Activated CD4-positive, alpha-beta memory T cell treated with anti-CD3 and anti-CD28 coated beads, Interleukin-2, amount 10 ng/mL, durations not matched to agents 7 days and 5 days (primary cell): ENCODE measurements at regions of chr10 and their contacts with region 1.

Region 1: DNA sequence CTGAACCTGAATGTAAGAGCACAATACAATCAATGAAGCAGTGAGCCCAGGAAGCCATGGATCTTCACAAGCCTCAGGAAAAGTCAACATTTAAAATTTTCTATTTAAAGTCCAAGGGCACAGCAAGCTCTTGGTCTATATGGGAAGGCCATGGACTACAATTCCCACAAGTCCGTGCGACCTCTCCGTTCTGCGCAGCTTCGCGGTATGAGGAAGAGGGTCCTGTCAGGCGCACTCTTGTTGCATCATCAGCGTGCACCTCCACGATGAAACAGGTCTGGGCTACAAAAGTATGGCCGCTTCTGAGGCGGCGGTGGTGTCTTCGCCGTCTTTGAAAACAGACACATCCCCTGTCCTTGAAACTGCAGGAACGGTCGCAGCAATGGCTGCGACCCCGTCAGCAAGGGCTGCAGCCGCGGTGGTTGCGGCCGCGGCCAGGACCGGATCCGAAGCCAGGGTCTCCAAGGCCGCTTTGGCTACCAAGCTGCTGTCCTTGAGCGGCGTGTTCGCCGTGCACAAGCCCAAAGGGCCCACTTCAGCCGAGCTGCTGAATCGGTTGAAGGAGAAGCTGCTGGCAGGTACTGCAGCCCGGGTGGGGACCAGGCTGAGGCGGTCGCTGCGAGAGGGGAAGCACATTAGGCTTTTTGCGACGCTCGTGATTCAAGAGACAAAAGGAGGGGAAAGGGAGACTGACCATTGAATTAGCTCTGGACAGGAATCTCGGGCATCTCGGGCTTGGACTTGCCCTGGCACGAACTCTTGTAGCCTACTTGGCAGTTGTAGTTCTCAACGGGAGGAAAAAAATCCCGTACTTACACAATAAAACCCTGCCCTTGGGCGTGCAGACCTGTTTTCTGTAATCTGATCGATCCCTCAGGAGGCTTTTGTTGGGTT is at the start of gene TRUB1:
- DNase-seq: peak; percentile 93
- H3K4me3 Mint-ChIP-seq: peak within 1 kb of the TSS; percentile 94
- H3K27ac Mint-ChIP-seq: peak within 1 kb of the TSS; percentile 83
- H3K4me1 Mint-ChIP-seq: peaks cover 32% of the 10 kb centered on the region
- H3K27me3 Mint-ChIP-seq: no peaks in the 10 kb centered on the region
- total RNA-seq, gene TRUB1: 14.9 to 16.7 TPM

Region 2: GRCh38 chr10:114850126-114850525 is 88.1 kb before region 1 on chr10:
- CTCF ChIA-PET with region 1: no interaction called
- POLR2A ChIA-PET with region 1: no interaction called
- DNase-seq: no peak
- H3K4me3 Mint-ChIP-seq: no peak overlapping the region
- H3K27ac Mint-ChIP-seq: no peak overlapping the region
- H3K4me1 Mint-ChIP-seq: peaks cover 13% of the 10 kb centered on the region
- H3K27me3 Mint-ChIP-seq: no peaks in the 10 kb centered on the region

Region 3: DNA sequence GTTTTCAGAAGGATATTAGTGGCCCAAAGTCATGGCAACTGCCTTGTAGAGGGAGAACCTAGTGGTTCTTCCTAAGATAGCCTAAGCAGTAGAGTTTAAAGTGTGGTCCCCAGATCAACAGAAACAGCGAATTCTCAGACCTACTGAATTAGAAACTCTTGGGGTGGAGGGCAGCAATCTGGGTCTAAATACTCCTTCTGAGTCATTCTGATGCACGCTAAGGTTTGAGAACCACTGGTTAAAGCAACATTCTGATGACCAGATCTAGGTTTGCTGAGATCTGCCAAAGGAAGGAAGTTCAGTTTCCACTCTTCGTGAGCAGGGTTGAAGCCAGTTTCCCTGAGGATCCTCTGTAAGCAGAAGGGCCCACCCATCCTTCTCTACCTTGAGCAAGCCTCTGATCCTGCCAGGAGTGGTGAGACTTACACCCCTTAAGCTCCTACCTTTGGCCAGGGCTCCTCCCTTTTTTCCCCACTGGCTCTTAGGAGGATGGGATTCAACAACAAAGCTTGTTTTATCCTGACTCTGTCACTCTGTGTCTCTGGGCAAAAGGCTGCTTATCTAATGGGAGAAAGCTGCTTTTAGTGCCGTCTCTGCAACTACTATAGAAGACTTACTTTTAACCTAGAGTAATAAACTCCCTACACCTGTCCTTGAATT is 27.0 kb before region 1 on chr10:
- CTCF ChIA-PET with region 1: no interaction called
- POLR2A ChIA-PET with region 1: interaction called, 39 read pairs
- DNase-seq: no peak
- H3K4me3 Mint-ChIP-seq: peak overlapping the region; percentile 21
- H3K27ac Mint-ChIP-seq: peak overlapping the region; percentile 72
- H3K4me1 Mint-ChIP-seq: peaks cover 44% of the 10 kb centered on the region
- H3K27me3 Mint-ChIP-seq: peaks cover 3% of the 10 kb centered on the region

Region 4: GRCh38 chr10:114920470-114920869 is 17.7 kb before region 1 on chr10:
- CTCF ChIA-PET with region 1: interaction called, 3 read pairs
- POLR2A ChIA-PET with region 1: interaction called, 39 read pairs
- DNase-seq: no peak
- H3K4me3 Mint-ChIP-seq: no peak overlapping the region
- H3K27ac Mint-ChIP-seq: no peak overlapping the region
- H3K4me1 Mint-ChIP-seq: peaks cover 18% of the 10 kb centered on the region
- H3K27me3 Mint-ChIP-seq: no peaks in the 10 kb centered on the region

Region 5: DNA sequence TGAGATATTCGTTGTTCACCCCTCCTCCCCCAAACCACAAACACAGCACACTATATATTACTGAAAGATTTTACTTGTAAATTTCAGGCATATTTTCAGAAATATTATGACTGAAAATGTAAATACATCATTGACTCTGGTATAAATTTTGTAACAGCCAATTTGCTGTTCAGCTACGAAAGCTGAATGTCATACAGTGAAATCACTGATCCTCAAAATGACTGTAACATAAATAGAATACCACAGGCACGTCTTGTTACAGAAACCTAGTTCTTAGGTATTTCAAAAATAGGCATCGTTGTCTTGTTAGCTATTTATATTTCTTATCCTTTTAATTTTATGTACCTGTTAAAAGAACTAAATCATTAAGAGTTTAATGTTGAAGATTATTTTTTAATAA is 14.8 kb after region 1 on chr10:
- CTCF ChIA-PET with region 1: interaction called, 3 read pairs
- POLR2A ChIA-PET with region 1: interaction called, 20 read pairs
- DNase-seq: no peak
- H3K4me3 Mint-ChIP-seq: no peak overlapping the region
- H3K27ac Mint-ChIP-seq: no peak overlapping the region
- H3K4me1 Mint-ChIP-seq: peaks cover 35% of the 10 kb centered on the region
- H3K27me3 Mint-ChIP-seq: no peaks in the 10 kb centered on the region